WTC11 (cell line): ENCODE measurements at regions of chr5 and their contacts with region 1.

Region 1: GRCh38 chr5:57499262-57500050 is 16.8 kb upstream of the ACTBL2 start:
- DNase-seq: peak; percentile 29
- ATAC-seq: peak; percentile 89
- H3K4me3 Mint-ChIP-seq: no peak overlapping the region
- H3K27ac Mint-ChIP-seq: no peak overlapping the region
- H3K4me1 Mint-ChIP-seq: peaks cover 17% of the 10 kb centered on the region
- H3K27me3 Mint-ChIP-seq: peaks cover 3% of the 10 kb centered on the region; the same call in 1 of the 2 replicates
- CTCF ChIP-seq: peak; percentile 33; the same call in 1 of the 2 replicates

Region 2: GRCh38 chr5:57298295-57298984 is 201.0 kb before region 1 on chr5:
- CTCF ChIA-PET with region 1: interaction called, 14 read pairs
- POLR2A ChIA-PET with region 1: no interaction called
- DNase-seq: peak; percentile 85
- ATAC-seq: peak; percentile 75
- H3K4me3 Mint-ChIP-seq: no peak overlapping the region
- H3K27ac Mint-ChIP-seq: no peak overlapping the region
- H3K4me1 Mint-ChIP-seq: peaks cover 20% of the 10 kb centered on the region
- H3K27me3 Mint-ChIP-seq: no peaks in the 10 kb centered on the region
- CTCF ChIP-seq: peak; percentile 63

Region 3: GRCh38 chr5:57458443-57458842 is 41.0 kb before region 1 on chr5:
- CTCF ChIA-PET with region 1: interaction called, 10 read pairs
- POLR2A ChIA-PET with region 1: no interaction called
- DNase-seq: no peak
- ATAC-seq: no peak
- H3K4me3 Mint-ChIP-seq: no peak overlapping the region
- H3K27ac Mint-ChIP-seq: no peak overlapping the region
- H3K4me1 Mint-ChIP-seq: no peaks in the 10 kb centered on the region
- H3K27me3 Mint-ChIP-seq: no peaks in the 10 kb centered on the region
- CTCF ChIP-seq: no peak

Region 4: GRCh38 chr5:57772512-57772911 is 273.1 kb after region 1 on chr5:
- CTCF ChIA-PET with region 1: interaction called, 37 read pairs
- POLR2A ChIA-PET with region 1: no interaction called
- DNase-seq: no peak
- ATAC-seq: no peak
- H3K4me3 Mint-ChIP-seq: no peak overlapping the region
- H3K27ac Mint-ChIP-seq: no peak overlapping the region
- H3K4me1 Mint-ChIP-seq: peaks cover 8% of the 10 kb centered on the region
- H3K27me3 Mint-ChIP-seq: no peaks in the 10 kb centered on the region
- CTCF ChIP-seq: no peak

Region 5: GRCh38 chr5:57779383-57780223 is 280.1 kb after region 1 on chr5:
- CTCF ChIA-PET with region 1: interaction called, 37 read pairs
- POLR2A ChIA-PET with region 1: no interaction called
- DNase-seq: peak; percentile 32
- ATAC-seq: peak; percentile 84
- H3K4me3 Mint-ChIP-seq: no peak overlapping the region
- H3K27ac Mint-ChIP-seq: no peak overlapping the region
- H3K4me1 Mint-ChIP-seq: peaks cover 18% of the 10 kb centered on the region
- H3K27me3 Mint-ChIP-seq: no peaks in the 10 kb centered on the region
- CTCF ChIP-seq: peak; percentile 45; the same call in 1 of the 2 replicates

Region 6: GRCh38 chr5:58460732-58461286 is 961.4 kb after region 1 on chr5:
- CTCF ChIA-PET with region 1: interaction called, 36 read pairs
- POLR2A ChIA-PET with region 1: no interaction called
- DNase-seq: peak; percentile 92
- ATAC-seq: peak; percentile 73
- H3K4me3 Mint-ChIP-seq: peak overlapping the region; percentile 49
- H3K27ac Mint-ChIP-seq: peak overlapping the region; percentile 24; the same call in 1 of the 2 replicates
- H3K4me1 Mint-ChIP-seq: peaks cover 34% of the 10 kb centered on the region
- H3K27me3 Mint-ChIP-seq: peaks cover 2% of the 10 kb centered on the region
- CTCF ChIP-seq: peak; percentile 59